Psoas muscle (tissue), 8 donors: ENCODE measurements at regions of chr6 and their contacts with region 1.

Region 1: GRCh38 chr6:8131256-8131897 is 29.0 kb upstream of the EEF1E1 start:
- DNase-seq: no peak
- ATAC-seq: no peak
- H3K4me3 ChIP-seq: no peak overlapping the region
- H3K27ac ChIP-seq: no peak overlapping the region
- H3K4me1 ChIP-seq: no peaks in the 10 kb centered on the region
- H3K27me3 ChIP-seq: no peaks in the 10 kb centered on the region
- CTCF ChIP-seq: peak; percentile 12

Region 2: GRCh38 chr6:8219352-8219943 is 88.1 kb after region 1 on chr6:
- intact Hi-C with region 1: loop called in 1 of 2 experiments (anchors 2 kb)
- DNase-seq: no peak
- ATAC-seq: peak in 1 of 4 donors; percentile 43
- H3K4me3 ChIP-seq: no peak overlapping the region
- H3K27ac ChIP-seq: no peak overlapping the region
- H3K4me1 ChIP-seq: no peaks in the 10 kb centered on the region
- H3K27me3 ChIP-seq: no peaks in the 10 kb centered on the region
- CTCF ChIP-seq: peak; percentile 71

Region 3: DNA sequence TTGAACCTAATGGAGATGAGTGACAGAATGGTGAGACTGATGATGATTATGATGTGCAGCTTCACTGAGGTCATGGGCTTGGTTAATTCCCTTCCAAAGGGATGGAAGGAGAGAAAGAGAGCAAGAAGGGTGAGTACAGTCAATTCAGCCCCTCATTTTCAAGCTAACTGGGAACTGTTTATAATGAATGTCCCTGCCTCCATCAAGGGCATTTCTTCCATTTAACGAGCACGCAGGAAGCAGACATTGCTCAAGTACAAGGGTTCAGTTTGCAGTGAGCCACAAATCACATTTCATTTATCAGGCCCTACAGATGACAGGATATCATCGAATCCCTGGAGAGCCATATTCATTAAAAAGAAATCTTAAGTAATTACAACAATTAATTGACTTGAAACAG is 129.2 kb after region 1 on chr6:
- intact Hi-C with region 1: no loop called
- DNase-seq: no peak
- ATAC-seq: no peak
- H3K4me3 ChIP-seq: no peak overlapping the region
- H3K27ac ChIP-seq: no peak overlapping the region
- H3K4me1 ChIP-seq: no peaks in the 10 kb centered on the region
- H3K27me3 ChIP-seq: no peaks in the 10 kb centered on the region
- CTCF ChIP-seq: no peak